HEK293 (cell line): ENCODE measurements at regions of chr18 and their contacts with region 1.

Region 1: GRCh38 chr18:10787293-10787901 is 261.6 kb downstream of the NAPG start:
- H3K4me3 ChIP-seq: no peak overlapping the region
- H3K27ac ChIP-seq: no peak overlapping the region
- H3K4me1 ChIP-seq: no peaks in the 10 kb centered on the region
- CTCF ChIP-seq: 0 out of 2 replicates have a peak, but pooled peaks have one; percentile 33

Region 2: GRCh38 chr18:10453806-10454673 is 333.4 kb before region 1 on chr18 and contains the start of gene APCDD1:
- CTCF ChIA-PET with region 1: no interaction called
- POLR2A ChIA-PET with region 1: no interaction called
- H3K4me3 ChIP-seq: peak within 1 kb of the TSS; percentile 53
- H3K27ac ChIP-seq: peak within 1 kb of the TSS; percentile 88
- H3K4me1 ChIP-seq: peaks cover 40% of the 10 kb centered on the region
- CTCF ChIP-seq: no peak

Region 3: GRCh38 chr18:10771053-10771709 is 16.2 kb before region 1 on chr18:
- CTCF ChIA-PET with region 1: interaction called, 40 read pairs
- POLR2A ChIA-PET with region 1: no interaction called
- H3K4me3 ChIP-seq: no peak overlapping the region
- H3K27ac ChIP-seq: no peak overlapping the region
- H3K4me1 ChIP-seq: no peaks in the 10 kb centered on the region
- CTCF ChIP-seq: no peak

Region 4: DNA sequence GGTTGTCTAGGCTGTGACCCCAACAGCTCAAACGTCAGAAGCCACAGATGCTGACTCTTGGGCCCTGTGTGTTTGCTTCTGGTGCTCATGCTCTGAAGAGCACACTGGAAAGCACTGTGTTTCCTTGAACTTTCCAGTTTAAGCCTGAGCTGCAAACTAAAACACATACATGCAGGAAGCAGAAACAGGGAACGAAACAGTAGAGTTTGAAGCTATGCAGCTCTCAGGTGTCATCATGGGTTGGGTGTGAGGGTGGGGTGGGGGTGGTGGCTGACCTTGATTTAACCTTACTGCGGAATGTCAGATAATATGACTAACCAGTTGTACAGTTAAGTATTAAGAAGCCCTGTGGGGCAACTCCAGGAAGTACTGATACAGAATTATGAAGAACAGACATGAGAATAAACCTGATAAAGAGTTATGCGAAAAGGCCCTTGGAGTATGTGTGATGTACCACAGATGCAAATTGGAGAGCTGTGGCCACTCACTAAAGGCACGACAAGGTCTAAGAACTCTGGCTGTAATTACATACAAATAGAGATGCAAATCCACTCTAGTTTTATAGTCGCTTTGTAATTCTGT is 11.4 kb after region 1 on chr18:
- CTCF ChIA-PET with region 1: interaction called, 17 read pairs
- POLR2A ChIA-PET with region 1: no interaction called
- H3K4me3 ChIP-seq: no peak overlapping the region
- H3K27ac ChIP-seq: no peak overlapping the region
- H3K4me1 ChIP-seq: 0 out of 2 replicates have a peak, but pooled peaks cover 2% of the 10 kb centered on the region
- CTCF ChIP-seq: no peak